ENCODE measurements at regions of chr9 and their contacts with region 1.

Region 1: GRCh38 chr9:35814841-35815543 is at the start of gene HINT2:
- DNase-seq: peak; percentile 93 to 96
- H3K4me3 ChIP-seq: peak within 1 kb of the TSS; percentile 72 to 98 (median 80)
- H3K27ac ChIP-seq: peak within 1 kb of the TSS; percentile 85
- H3K4me1 ChIP-seq: peaks cover 0 to 7% (median 4%) of the 10 kb centered on the region in 4 experiments; a peak in 6 of 7 replicates
- H3K27me3 ChIP-seq: peaks cover 0 to 3% (median 2%) of the 10 kb centered on the region in 4 experiments; a peak in 1 of 7 replicates
- CTCF ChIP-seq: no peak
- EP300 ChIP-seq: no peak
- POLR2A ChIP-seq: peak; percentile 7 to 79; a peak in 2 of 3 replicates
- RAD21 ChIP-seq: no peak
- total RNA-seq, gene HINT2: 32.1 and 34.8 TPM in 2 replicates

Region 2: GRCh38 chr9:35322075-35322885 is 492.7 kb before region 1 on chr9:
- CTCF ChIA-PET with region 1: no interaction called
- POLR2A ChIA-PET with region 1: no interaction called
- DNase-seq: no peak
- H3K4me3 ChIP-seq: no peak overlapping the region
- H3K27ac ChIP-seq: no peak overlapping the region
- H3K4me1 ChIP-seq: no peaks in the 10 kb centered on the region
- H3K27me3 ChIP-seq: no peaks in the 10 kb centered on the region
- CTCF ChIP-seq: no peak
- EP300 ChIP-seq: no peak
- POLR2A ChIP-seq: no peak
- RAD21 ChIP-seq: no peak

Region 3: DNA sequence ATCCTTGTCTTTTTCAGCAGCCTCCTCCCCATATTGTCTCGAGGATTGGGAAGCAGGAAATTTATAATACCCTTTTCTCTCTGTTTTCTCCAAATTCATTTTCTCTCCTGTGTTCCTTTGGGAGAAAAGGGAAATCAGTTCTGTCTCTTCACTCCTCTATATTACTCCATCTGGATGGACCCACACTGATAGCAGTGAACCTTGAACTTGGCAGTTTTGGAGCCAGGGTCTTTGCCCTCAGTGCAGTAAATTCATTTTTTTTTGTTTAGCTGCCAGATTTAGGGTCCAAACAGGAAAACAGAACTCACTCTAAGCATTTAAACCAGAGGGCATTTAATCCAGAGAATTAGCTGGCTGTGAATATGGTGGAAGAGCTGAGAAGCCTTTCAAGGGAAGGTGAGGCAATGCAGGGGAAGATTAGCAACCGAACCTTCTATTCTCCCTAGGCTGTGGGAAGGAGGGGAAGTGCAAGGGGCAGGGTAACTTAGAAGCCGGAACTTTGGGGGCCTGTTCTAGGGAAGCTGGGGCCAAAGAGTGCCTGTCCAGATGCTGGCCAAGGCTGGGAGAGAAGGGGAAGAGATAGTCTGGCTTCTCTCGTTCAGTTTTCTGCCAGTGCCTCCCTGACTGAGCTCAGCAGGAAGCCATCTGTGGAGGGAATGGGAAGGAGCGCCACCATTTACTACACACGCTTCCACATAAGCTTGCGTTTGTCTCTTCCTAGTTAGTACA is 39.9 kb before region 1 on chr9:
- CTCF ChIA-PET with region 1: interaction called, 10 read pairs
- POLR2A ChIA-PET with region 1: interaction called, 3 read pairs
- DNase-seq: peak in 1 of 2 experiments; percentile 52
- H3K4me3 ChIP-seq: no peak overlapping the region
- H3K27ac ChIP-seq: no peak overlapping the region
- H3K4me1 ChIP-seq: peaks cover 0 to 6% (median 4%) of the 10 kb centered on the region in 4 experiments; a peak in 6 of 7 replicates
- H3K27me3 ChIP-seq: no peaks in the 10 kb centered on the region
- CTCF ChIP-seq: no peak
- EP300 ChIP-seq: no peak
- POLR2A ChIP-seq: no peak
- RAD21 ChIP-seq: no peak

Region 4: DNA sequence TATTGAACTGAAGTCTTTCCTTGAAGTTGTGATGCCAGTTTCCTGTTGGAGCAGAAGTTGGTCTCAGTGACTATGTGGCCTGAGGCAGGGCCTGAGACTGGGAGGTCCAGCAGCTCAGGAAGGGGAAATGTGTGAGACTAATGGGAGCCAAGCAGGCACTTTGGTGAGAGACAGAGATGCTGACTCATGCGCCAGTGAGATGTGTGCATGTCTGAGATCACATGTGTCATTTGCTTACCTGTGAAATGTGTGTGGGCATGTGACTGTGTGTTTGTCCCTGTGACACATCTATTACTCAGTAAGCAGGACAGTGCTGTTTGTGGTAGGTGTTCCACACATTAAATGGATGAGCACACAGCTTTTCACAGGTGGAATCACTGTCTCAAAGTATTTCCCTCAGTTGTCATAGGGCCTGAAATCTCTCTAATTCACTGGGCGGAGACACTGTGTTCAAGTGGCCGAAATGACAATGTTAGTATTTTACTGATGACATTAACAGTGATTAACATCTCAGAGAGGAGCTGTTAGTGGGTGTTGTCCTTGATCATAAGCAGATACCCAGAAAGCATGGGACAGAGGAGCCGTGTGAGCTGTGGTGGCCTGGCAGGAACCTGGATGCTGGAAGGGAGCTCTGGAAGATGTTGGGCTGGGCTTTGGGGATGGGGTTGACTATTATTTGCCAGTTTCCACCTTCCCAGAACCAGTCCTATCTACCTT is 16.2 kb before region 1 on chr9:
- CTCF ChIA-PET with region 1: interaction called, 18 read pairs
- POLR2A ChIA-PET with region 1: interaction called, 6 read pairs
- DNase-seq: no peak
- H3K4me3 ChIP-seq: no peak overlapping the region
- H3K27ac ChIP-seq: no peak overlapping the region
- H3K4me1 ChIP-seq: no peaks in the 10 kb centered on the region
- H3K27me3 ChIP-seq: no peaks in the 10 kb centered on the region
- CTCF ChIP-seq: no peak
- EP300 ChIP-seq: no peak
- POLR2A ChIP-seq: no peak
- RAD21 ChIP-seq: no peak

Region 5: GRCh38 chr9:35835216-35835632 is 20.2 kb after region 1 on chr9:
- CTCF ChIA-PET with region 1: interaction called, 172 read pairs
- POLR2A ChIA-PET with region 1: interaction called, 7 read pairs
- DNase-seq: no peak
- H3K4me3 ChIP-seq: no peak overlapping the region
- H3K27ac ChIP-seq: no peak overlapping the region
- H3K4me1 ChIP-seq: no peaks in the 10 kb centered on the region; a peak in 2 of 7 replicates
- H3K27me3 ChIP-seq: no peaks in the 10 kb centered on the region; a peak in 1 of 7 replicates
- CTCF ChIP-seq: peak; percentile 55 to 82 (median 72)
- EP300 ChIP-seq: no peak
- POLR2A ChIP-seq: no peak
- RAD21 ChIP-seq: peak; percentile 50 to 66